ENCODE measurements at regions of chr14 and their contacts with region 1.

Region 1: GRCh38 chr14:55446218-55446654 is 5.8 kb upstream of the TBPL2 start:
- DNase-seq: no peak
- H3K4me3 ChIP-seq: no peak overlapping the region
- CTCF ChIP-seq: peak; percentile 69

Region 2: DNA sequence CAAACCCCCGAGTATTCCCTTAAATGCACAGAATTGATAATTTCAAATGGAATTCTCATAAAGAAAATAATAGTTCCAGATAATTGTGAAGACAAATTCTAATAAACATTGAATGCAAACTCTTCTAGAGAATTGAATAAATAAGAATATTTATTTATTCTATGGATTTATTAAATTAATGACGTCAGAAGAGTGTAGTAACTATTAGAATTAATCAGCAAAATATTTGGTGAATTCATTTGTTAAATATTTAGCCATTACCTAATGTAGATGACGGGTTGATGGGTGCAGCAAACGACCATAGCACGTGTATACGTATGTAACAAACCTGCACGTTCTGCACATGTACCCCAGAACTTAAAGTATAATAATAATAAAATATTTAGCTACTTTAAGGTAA is 27.6 kb after region 1 on chr14:
- CTCF ChIA-PET with region 1: interaction called, 10 read pairs
- POLR2A ChIA-PET with region 1: no interaction called
- DNase-seq: no peak
- H3K4me3 ChIP-seq: no peak overlapping the region
- CTCF ChIP-seq: no peak

Region 3: DNA sequence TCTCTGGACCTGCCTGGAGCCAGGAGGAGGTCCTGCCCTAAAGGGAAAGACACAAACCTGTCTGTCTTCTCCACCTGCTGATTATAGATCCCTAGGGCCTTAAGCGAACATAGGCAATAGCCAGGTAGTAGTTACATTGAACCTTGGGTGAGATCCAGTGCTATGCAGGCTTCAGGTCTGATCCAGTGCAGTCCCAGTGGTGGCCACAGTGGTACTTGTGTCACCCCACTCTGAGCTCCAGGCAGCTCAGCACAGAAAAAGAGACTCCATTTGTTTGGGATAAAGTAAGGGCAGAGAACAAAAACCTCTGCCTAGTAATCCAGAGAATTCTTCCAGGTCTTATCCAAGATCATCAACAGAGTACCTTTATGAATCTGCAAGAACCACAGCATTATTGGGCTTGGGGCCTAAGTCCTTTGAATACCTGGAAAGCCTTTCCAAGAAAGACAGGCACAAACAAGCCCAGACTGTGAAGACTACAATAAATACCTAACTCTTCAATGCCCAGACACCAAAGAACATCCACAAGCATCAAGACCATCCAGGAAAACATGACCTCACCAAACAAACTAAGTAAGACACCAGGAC is 73.3 kb after region 1 on chr14:
- CTCF ChIA-PET with region 1: no interaction called
- POLR2A ChIA-PET with region 1: no interaction called
- DNase-seq: no peak
- H3K4me3 ChIP-seq: no peak overlapping the region
- CTCF ChIP-seq: no peak

Region 4: DNA sequence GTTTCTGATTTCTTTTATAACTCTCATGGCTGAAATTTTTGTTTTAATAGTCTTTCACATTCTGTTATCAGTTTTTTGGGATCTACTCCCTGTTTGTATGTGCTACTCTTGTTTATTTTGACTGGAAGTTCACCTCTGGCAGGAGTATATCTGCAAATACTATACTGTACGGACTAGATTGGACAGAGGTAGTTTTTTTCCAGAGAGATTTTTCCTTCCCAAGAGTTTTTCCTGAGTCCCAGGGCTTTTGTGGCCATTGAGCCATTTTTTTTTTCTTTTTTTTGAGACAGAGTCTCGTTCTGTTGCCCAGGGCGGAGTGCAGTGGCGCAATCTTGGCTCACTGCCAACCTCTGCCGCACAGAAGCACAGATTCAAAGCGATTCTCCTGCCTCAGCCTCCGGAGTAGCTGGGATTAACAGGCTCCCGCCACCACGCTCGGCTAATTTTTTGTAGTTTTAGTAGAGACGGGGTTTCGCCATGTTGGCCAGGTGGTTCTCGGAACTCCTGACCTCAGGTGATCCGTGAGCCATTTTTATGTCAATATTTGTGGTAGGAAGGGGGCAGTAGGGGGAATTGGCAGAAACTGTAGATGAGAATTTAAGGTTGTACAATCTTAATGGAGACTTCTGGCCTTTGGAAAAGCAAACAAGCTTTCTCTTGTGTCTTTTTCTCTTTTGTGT is 153.1 kb after region 1 on chr14:
- CTCF ChIA-PET with region 1: interaction called, 28 read pairs
- POLR2A ChIA-PET with region 1: no interaction called
- DNase-seq: no peak
- H3K4me3 ChIP-seq: no peak overlapping the region
- CTCF ChIP-seq: no peak

Region 5: DNA sequence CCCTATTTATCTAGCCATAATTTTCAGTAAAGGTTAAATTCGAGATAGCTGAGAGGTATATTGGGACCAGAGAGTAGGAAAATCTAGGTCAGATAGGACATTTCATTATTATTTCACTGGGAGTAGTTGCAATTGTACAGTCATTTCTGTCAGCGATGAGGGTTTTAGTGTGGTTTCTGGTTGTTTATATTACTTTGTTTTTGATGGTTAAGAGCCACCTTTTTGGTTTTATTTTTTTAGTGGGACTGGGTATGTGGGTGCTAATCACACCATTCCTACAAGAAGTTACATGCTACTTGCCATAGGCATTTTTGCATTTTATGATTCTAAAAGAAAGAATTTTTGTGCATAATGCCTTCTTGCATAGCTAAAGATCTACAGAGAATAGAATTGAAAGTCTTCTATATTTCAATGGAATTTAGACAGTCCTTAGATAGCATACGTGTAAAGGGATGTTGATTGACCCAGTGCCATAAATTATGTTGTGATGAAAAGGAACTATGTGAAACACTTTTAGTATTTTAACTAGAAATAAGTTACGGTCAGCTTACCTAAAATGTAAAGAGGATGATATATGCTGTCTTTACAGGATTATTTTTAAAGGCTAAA is 218.9 kb after region 1 on chr14:
- CTCF ChIA-PET with region 1: interaction called, 17 read pairs
- POLR2A ChIA-PET with region 1: no interaction called
- DNase-seq: no peak
- H3K4me3 ChIP-seq: no peak overlapping the region
- CTCF ChIP-seq: no peak

Region 6: DNA sequence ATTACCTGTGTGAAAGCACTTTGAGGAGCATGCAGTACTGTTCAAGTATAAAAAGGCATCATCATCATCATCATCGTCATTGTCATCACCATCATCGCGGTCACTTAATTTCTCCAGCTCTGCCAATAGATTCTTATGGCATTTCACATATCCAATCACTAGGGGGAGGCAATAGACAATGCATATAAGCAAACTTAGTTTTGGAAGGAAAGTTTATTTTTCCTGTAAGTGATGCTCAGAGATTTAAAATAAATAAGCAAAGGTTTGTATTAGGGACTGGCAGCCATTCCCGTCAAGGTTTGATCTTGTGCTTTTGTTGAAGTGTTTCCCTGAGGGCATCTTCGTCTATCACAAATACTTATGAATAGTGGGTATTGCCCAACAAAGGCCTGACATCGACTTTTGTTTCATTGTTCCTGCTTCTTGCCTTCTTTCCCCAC is 261.1 kb after region 1 on chr14:
- CTCF ChIA-PET with region 1: interaction called, 19 read pairs
- POLR2A ChIA-PET with region 1: no interaction called
- DNase-seq: peak; percentile 23
- H3K4me3 ChIP-seq: no peak overlapping the region
- CTCF ChIP-seq: peak; percentile 54

Measured in AG04449 (cell line).